ENCODE measurements at regions of chrX and their contacts with region 1.

Region 1: DNA sequence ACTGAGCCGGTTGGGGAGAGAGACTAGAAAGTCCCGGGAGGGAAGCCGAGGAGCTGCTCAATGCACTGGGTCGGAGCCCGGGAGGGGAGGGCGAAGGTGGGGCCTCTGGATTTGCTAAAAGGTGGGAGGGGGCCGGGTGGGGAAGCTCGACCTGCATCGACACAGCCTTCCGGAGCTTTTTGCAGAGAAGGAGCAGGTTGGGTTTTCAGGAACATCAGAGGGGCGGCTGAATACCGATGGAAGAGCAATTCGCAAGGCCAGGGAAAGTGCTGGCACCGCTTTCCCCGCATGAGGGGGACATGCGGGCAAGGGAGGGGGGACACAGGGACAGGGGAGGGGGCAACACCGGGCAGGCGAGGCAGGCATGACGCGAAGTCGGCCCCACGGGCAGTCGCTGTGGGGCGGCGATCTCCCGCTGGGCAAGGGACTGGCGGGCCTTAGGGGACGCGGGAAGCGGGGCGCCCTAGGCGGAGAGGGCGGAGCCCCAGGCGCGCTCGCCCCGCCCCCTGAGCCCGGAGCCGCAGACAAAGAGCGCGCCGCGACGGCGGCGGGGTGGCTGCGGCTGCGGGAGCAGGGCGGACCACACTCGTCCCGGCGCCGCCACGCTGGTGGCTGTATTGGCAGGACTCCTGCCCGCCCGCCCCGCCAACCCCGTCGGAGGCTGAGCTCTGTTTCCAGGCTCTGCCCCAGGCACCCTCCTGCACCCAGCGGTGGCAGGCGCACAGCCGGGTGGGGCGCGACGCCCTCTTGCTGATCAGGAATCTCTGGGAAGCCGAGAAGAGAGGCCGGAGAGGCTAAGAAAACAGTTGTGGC is 11.6 kb downstream of the PDZD4 start:
- DNase-seq: peak; percentile 49
- H3K4me3 Mint-ChIP-seq: no peak overlapping the region
- H3K27ac Mint-ChIP-seq: no peak overlapping the region
- H3K4me1 Mint-ChIP-seq: peaks cover 23% of the 10 kb centered on the region
- H3K27me3 Mint-ChIP-seq: peaks cover 19% of the 10 kb centered on the region

Region 2: GRCh38 chrX:153875391-153876111 is 56.8 kb after region 1 on chrX:
- intact Hi-C with region 1: loop called (anchors 5 kb)
- DNase-seq: peak; percentile 54
- H3K4me3 Mint-ChIP-seq: no peak overlapping the region
- H3K27ac Mint-ChIP-seq: no peak overlapping the region
- H3K4me1 Mint-ChIP-seq: peaks cover 24% of the 10 kb centered on the region
- H3K27me3 Mint-ChIP-seq: peaks cover 5% of the 10 kb centered on the region

Region 3: DNA sequence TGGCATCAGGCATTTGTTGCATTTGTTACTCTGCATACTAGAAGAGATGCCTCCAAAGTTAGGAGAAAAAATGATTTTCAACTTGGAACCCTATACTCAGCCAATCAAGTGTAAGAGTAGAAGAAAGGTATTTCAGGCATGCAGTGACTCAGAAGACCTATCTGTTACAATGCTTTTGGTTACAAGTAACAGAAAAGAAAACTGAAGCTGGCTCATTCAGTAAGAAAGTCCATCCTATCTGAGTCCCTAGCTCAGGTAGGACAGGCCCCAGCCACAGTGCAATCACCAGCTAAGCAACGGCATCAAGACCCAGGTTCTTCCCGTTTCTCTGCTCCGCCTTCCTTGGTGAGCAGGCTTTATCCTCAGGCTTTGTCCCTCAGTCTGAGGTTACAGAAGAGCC is 255.4 kb after region 1 on chrX:
- intact Hi-C with region 1: no loop called
- DNase-seq: no peak
- H3K4me3 Mint-ChIP-seq: no peak overlapping the region
- H3K27ac Mint-ChIP-seq: no peak overlapping the region
- H3K4me1 Mint-ChIP-seq: peaks cover 11% of the 10 kb centered on the region
- H3K27me3 Mint-ChIP-seq: no peaks in the 10 kb centered on the region